Left cardiac atrium (tissue), 4 donors: ENCODE measurements at regions of chr11 and their contacts with region 1.

Region 1: DNA sequence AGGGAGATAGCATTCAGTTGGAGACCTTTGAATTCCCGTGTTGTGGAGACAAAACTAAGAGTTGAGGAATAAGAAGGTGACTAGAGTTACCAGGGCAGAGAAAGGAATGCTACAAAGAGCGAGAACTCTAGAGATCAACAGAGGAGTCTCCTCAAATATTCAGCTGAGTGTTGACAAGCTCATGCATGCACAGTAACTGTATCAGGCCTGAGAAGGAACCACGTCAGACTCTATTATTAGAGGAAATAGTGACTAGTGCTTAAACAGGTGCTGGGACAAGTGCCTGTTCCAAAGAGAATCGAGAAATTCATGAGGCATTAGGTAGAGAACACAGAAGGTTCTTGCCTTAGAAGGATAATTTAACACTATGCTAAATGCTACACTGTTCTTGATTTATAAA is 333.8 kb upstream of the CHORDC1 start:
- DNase-seq: no peak
- ATAC-seq: peak in 1 of 2 donors; percentile 59

Region 2: GRCh38 chr11:90476442-90477007 is 80.1 kb before region 1 on chr11:
- intact Hi-C with region 1: loop called in 1 of 2 experiments (anchors 5 kb)
- DNase-seq: no peak
- ATAC-seq: no peak